ENCODE measurements at regions of chrX and their contacts with region 1.

Region 1: DNA sequence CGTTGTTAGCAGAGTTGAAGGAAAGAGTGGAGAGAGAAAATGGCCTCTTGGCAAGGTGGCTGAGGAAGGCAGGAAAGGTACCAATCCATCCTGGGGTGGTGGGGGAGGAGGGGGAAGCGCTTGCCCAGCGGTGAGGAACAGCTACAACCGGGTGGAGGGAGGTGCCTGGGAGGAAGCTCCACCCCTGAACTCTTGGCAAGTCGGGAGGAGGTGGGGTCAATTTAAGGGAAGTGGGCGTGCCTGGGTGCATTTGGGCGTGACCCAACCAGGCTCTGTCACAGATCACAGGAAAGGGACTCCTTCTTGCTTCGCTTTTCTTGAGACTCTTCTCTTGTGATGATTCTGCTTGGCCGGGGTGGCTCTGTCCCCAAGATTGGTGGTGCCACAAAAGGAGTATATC is 41.7 kb downstream of the BCORL1 start:
- DNase-seq: no peak
- H3K4me3 ChIP-seq: no peak overlapping the region
- CTCF ChIP-seq: no peak

Region 2: GRCh38 chrX:129925305-129926092 is 98.6 kb before region 1 on chrX:
- CTCF ChIA-PET with region 1: interaction called, 94 read pairs
- POLR2A ChIA-PET with region 1: no interaction called
- DNase-seq: no peak
- H3K4me3 ChIP-seq: no peak overlapping the region
- CTCF ChIP-seq: peak; percentile 43

Region 3: GRCh38 chrX:130039847-130040246 is 15.7 kb after region 1 on chrX:
- CTCF ChIA-PET with region 1: interaction called, 20 read pairs
- POLR2A ChIA-PET with region 1: no interaction called
- DNase-seq: no peak
- H3K4me3 ChIP-seq: no peak overlapping the region
- CTCF ChIP-seq: no peak

Region 4: DNA sequence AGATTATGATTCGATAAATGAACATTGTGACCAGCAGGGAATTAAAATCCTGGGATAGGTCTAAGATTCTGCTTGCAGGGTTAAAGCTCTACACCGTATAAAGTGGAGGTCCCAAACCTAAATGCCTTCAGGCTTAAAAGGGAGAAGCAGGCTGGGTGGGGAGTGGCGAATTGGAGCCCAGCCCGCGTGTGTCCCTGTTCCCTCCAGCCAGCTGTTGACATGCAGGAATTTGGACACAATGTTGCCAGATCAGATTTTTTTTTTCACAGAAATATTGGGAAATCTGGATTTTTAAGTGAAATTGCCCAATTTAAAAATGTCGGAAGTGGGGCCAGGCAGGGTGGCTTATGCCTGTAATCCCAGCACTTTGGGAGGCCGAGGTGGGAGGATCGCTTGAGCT is 25.7 kb after region 1 on chrX:
- CTCF ChIA-PET with region 1: interaction called, 13 read pairs
- POLR2A ChIA-PET with region 1: no interaction called
- DNase-seq: no peak
- H3K4me3 ChIP-seq: no peak overlapping the region
- CTCF ChIP-seq: no peak

Region 5: DNA sequence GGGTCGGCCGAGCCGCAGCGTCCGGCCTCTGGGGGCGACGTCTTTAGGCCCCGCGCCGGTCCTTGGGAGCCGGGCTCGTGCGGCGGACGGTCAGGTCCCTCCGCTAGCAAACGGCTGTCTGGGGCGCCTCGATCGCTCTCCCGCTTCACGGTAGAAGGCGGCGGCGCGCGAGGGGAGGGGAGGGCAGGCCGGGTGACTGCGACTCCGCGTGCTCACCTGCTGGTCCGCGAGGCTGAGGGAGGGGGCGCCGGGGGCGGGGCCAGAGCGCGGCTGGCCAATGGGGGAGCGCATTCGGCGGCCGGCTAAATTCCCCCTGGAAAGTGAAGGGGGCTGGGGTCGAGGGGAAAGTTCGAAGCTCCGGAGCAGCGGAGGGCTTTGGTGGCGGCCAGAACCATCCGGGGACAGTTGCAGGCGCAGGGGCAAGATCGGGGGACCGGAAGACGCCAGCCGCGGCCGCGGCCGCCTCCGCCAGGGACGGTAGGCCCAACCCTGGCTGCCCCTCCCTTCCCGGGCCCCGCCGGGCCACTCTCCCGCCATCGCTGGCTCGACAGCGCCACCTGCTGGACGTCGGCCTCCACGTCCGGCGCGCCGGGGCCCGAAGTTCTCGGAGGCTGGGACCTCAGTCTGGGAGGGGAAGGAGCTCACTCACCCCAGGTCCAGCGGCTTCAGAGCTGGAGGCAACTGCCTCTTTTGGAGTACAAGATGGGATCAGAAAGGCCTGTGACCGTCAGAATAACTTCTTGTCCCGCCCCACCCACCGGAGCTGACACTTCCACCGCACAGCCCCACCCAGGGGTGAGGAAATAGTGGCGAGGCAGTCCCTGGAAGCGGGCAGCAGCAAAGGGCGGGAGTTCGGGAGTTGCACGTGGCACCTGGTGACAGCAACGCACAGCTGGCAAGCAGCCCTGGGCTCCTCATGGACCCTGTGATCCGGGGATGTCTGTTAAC is 36.3 kb after region 1 on chrX:
- CTCF ChIA-PET with region 1: interaction called, 10 read pairs
- POLR2A ChIA-PET with region 1: no interaction called
- DNase-seq: no peak
- H3K4me3 ChIP-seq: peak overlapping the region; percentile 59
- CTCF ChIP-seq: peak; percentile 84

Region 6: DNA sequence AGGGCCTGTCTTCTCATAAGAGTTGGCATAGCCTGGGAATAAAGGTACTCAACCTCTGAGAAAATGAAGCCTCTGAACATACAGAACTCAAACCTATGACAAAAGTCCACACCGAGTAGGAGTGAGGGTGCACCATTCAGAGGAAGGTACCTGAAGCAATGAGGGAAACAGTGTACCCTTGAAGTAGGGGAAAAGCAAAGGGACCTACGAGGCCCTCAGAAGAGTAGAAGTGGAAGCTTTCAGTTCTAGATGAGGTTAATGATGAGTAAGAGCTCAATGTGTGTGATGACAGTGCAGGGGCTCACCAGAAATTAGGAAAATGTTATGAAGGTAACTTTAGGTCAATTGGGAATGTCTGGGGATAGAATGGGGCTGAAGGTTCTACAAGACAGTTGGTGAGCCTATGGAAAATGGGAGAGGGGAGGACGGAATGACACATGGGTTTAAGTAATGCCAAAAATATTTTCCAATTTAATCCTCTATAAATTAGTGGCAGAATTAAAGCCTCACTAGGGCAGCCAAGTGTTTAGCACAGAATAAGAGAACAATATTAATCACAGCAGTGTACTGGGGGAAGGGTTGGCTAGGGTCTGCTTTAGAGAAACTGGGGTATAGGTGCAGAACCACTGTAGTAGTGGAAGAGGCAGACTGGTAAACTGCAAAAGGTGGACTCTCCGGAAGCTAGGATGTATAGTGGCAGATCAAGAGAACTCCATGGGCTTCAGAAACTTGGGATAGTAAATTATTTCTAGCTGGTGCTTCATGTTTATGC is 187.5 kb after region 1 on chrX:
- CTCF ChIA-PET with region 1: no interaction called
- POLR2A ChIA-PET with region 1: no interaction called
- DNase-seq: no peak
- H3K4me3 ChIP-seq: no peak overlapping the region
- CTCF ChIP-seq: no peak

Region 7: GRCh38 chrX:130260316-130260715 is 236.2 kb after region 1 on chrX:
- CTCF ChIA-PET with region 1: no interaction called
- POLR2A ChIA-PET with region 1: no interaction called
- DNase-seq: no peak
- H3K4me3 ChIP-seq: no peak overlapping the region
- CTCF ChIP-seq: no peak